MCF 10A (cell line): ENCODE measurements at regions of chr7 and their contacts with region 1.

Region 1: DNA sequence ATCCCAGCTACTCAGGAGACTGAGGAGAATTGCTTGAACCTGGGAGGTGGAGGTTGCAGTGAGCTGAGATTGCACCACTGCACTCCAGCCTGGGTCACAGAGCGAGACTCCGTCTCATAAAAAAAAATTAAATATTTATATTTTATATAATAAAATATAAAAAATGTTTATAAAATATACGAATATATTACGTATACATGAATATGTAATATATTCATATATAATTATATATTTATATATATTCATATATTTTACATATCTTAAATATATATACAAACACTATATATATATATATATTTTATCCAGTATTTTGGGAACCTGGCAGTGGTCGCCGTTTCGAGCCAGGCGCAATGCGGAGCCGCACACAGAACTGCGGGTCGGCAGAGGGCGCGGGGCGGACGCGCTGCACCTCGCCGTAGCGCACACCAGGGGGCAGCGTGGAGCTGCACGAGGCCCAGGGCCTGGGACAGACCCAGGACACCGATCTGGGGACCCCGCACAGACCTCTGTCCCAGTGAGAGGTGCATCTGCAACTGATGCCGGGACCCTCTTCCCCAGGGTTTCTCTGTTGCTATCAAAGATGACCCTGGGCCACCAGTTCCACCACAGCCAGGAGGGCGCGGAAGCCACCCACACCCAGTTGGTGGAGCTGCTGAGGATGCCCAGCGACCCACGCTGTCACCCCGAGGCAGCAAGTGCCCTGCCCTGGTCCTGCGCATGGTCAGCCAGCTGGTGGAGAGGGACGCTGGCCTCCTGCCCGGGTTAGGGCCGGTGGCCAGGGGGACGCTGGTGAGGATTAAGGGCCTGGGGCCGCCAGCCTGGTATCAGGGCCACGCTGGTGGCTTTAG is 22.7 kb downstream of the AP5Z1 start:
- DNase-seq: peak; percentile 36
- H3K4me3 Mint-ChIP-seq: no peak overlapping the region
- H3K27ac Mint-ChIP-seq: no peak overlapping the region
- H3K4me1 Mint-ChIP-seq: no peaks in the 10 kb centered on the region
- H3K27me3 Mint-ChIP-seq: no peaks in the 10 kb centered on the region
- CTCF ChIP-seq: peak; percentile 87

Region 2: DNA sequence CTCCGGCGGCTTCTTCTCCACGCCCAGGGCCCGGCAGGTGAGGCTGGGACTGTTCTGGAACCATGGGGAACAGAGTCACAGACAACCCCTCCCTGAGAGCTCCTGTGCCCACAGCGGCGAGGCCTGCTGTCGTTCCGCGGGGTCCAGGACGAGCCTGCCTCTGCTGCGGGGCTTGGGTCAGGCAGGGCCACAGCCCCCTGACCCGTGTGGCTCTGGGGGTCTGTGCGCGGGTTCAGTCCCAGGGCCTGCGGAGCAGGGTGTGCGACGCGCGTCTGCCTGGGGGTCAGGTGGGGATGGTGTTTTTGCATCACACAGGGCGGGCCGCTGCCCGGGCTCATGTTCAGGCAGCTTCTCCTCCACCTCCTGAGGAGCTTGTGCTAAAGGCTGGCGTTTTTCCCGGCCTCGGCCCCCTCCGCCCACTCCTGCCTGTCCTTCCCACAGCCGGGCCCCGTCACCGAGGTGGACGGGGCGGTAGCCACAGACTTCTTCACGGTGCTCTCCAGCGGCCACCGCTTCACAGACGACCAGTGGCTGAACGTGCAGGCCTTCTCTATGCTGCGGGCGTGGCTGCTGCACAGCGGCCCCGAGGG is 14.2 kb before region 1 on chr7:
- CTCF ChIA-PET with region 1: interaction called, 12 read pairs
- POLR2A ChIA-PET with region 1: no interaction called
- intact Hi-C with region 1: no loop called
- DNase-seq: no peak
- H3K4me3 Mint-ChIP-seq: no peak overlapping the region
- H3K27ac Mint-ChIP-seq: no peak overlapping the region
- H3K4me1 Mint-ChIP-seq: peaks cover 5% of the 10 kb centered on the region
- H3K27me3 Mint-ChIP-seq: no peaks in the 10 kb centered on the region
- CTCF ChIP-seq: no peak

Region 3: GRCh38 chr7:4849369-4849768 is 51.3 kb after region 1 on chr7:
- CTCF ChIA-PET with region 1: no interaction called
- POLR2A ChIA-PET with region 1: no interaction called
- intact Hi-C with region 1: no loop called
- DNase-seq: peak; percentile 62
- H3K4me3 Mint-ChIP-seq: no peak overlapping the region
- H3K27ac Mint-ChIP-seq: no peak overlapping the region
- H3K4me1 Mint-ChIP-seq: no peaks in the 10 kb centered on the region
- H3K27me3 Mint-ChIP-seq: peaks cover 24% of the 10 kb centered on the region
- CTCF ChIP-seq: peak; percentile 47

Region 4: DNA sequence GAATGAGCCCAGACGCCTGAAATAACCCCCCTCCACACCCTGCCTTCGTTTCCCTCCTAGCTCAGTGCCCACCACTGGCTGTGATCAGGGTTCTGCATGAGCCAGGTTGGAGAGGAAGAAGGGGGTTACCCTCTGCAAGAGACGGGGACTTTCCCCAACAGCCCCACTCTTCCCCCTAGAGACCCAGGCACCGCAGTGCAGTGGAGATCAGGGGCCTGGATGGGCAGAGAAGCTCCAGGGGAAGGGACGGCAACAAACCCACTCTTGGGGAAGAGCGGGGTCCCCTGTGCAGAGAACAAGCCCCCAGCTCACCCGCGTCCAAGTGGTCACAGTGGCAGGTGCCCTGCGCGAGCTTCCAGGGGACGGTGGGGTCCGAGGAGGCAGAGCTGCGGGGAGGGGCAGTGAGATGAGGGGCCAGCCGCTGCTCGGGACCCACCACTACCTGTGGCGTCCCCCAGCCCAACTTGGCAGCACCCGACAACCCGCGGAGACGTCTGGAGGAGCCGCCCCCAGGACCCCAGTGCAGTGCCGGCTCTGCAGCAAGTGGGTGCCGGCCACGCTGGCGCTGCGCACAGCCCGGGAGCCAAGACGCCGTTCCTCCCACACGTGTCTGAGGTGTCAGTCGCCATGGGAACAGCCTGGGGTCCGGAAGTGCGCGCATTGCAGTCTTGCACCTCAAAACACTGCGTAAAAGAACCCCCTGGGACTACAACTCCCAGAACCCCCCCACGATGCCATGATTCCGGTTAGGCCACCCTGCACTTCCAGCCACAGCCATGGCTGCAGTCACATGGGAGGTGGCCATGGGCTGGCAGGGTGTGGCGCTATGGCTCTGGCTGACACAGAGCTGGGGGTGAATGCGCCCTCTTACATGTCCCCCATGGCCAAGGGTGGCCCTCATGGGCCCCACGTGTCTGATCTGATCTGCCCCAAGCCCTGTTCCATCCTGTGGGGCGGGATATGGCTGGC is 346.1 kb after region 1 on chr7:
- CTCF ChIA-PET with region 1: no interaction called
- POLR2A ChIA-PET with region 1: no interaction called
- intact Hi-C with region 1: no loop called
- DNase-seq: no peak
- H3K4me3 Mint-ChIP-seq: no peak overlapping the region
- H3K27ac Mint-ChIP-seq: no peak overlapping the region
- H3K4me1 Mint-ChIP-seq: no peaks in the 10 kb centered on the region
- H3K27me3 Mint-ChIP-seq: peaks cover 15% of the 10 kb centered on the region
- CTCF ChIP-seq: no peak